MCF 10A (cell line): ENCODE measurements at regions of chr5 and their contacts with region 1.

Region 1: DNA sequence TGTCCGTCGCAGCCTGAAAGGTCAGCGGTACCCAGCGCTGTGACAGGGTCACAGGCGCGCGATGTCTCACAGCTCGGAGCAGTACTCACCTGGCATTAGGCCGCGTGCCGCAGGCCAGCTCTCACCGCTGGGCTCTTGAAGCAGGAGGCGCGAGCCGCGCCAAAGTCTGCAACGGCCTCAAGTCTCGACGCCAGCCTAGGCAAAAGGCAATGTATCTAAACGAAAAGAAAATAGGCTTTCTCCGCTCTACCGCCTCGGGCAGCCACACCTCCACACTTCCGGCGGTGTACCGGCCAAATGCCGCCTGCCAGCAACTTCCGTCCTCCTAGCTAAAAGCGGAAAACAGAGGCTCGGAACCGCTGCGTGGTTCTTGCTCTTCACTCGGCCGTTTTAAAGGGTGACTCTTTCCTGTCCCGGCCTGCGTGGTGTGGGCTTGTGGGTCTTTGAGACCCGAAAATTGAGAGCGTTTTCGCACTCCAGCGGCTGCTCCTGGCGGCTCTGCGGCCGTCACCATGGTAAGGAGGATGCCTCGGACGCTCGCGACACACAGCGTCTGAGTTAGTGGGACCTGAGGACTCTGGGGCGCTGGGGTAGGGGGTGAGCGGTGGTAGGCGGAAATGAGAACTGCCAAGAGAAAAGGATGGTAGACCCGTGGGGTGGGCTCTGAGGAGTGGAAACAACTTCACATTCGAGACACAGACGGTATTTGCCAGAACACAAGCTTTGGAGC is at the starts of genes GFM2 and NSA2:
- DNase-seq: peak; percentile 94
- H3K4me3 Mint-ChIP-seq: peak within 1 kb of the TSS; percentile 98
- H3K27ac Mint-ChIP-seq: peak within 1 kb of the TSS; percentile 92
- H3K4me1 Mint-ChIP-seq: peaks cover 20% of the 10 kb centered on the region
- H3K27me3 Mint-ChIP-seq: no peaks in the 10 kb centered on the region
- CTCF ChIP-seq: no peak
- total RNA-seq, gene GFM2: 26.4 and 31.9 TPM in 2 replicates
- total RNA-seq, gene NSA2: 84.9 and 106 TPM in 2 replicates

Region 2: GRCh38 chr5:74778609-74779008 is 11.6 kb after region 1 on chr5:
- CTCF ChIA-PET with region 1: interaction called, 3 read pairs
- POLR2A ChIA-PET with region 1: interaction called, 14 read pairs
- intact Hi-C with region 1: no loop called
- DNase-seq: no peak
- H3K4me3 Mint-ChIP-seq: no peak overlapping the region
- H3K27ac Mint-ChIP-seq: no peak overlapping the region
- H3K4me1 Mint-ChIP-seq: no peaks in the 10 kb centered on the region
- H3K27me3 Mint-ChIP-seq: no peaks in the 10 kb centered on the region
- CTCF ChIP-seq: no peak

Region 3: DNA sequence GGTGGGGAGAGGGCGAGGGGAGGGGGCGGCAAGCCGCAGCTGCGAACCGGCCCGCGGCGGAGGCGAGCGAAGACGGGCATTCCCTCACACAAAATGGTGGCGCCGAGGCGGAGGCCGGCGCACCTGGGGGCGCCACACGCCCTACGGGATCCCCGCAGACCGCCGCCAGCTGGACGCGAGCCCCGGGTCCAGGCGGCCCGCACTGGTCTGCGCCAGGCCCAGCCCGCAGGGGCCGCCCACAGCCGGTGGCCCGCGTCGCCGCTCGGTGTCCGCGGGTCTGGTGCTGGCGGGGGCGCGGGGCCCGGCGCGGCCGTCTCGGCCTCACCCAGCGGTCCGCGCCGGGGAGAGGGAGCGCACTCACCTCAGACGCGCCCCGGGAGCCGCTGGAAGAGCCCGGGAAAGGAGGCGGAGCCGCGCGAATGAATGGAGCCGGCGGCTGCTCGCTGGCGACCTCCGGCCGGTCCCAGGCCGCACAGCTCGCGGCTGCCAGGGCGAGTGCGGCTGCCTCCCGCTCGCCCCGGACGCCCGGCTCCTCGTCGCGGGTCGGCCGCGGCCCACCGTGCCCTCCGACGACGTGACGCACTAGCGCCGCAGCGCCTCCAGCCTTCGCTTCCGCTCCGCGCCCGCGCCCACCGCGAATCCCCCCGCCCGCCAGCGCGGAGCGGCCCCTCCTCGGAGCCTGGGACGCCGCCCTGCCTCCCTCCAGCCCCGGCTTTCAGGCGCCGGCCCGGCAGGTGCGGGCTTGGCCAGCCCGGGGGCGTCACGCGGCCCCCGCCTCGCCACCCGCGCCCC is 99.0 kb after region 1 on chr5 and contains the start of gene FAM169A:
- CTCF ChIA-PET with region 1: interaction called, 3 read pairs
- POLR2A ChIA-PET with region 1: interaction called, 12 read pairs
- intact Hi-C with region 1: no loop called
- DNase-seq: peak; percentile 63
- H3K4me3 Mint-ChIP-seq: peak within 1 kb of the TSS; percentile 84
- H3K27ac Mint-ChIP-seq: peak within 1 kb of the TSS; percentile 91
- H3K4me1 Mint-ChIP-seq: peaks cover 23% of the 10 kb centered on the region
- H3K27me3 Mint-ChIP-seq: no peaks in the 10 kb centered on the region
- CTCF ChIP-seq: no peak
- total RNA-seq, gene FAM169A: 13.5 and 14.3 TPM in 2 replicates

Region 4: DNA sequence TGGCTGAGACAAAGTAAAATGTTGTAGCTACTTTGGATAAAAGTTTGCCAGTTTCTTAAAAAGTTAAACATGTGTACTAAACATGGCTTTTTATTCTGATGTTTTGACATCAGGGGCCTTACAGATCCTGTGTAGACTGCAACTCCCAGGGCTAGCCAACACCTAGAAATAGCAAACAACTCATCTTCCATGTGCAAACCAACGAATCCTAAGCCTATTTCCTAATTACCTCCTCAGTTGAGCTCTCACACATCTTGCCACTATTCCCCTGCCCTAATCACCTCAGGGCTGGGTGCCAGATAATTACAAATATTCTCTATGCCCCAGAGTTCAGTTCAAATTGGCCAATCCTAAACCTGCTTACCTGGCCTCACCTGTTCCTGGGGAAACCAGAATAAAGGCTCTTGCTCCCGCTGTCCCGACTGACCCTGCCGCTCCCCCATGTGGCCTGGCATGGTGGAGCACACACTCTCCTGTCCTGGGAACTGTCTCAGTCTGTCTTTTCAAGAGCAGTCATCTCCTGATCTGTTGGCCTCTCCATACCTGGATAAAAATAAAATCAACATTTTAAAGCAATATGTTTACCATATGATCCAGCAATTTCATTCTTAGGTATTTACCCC is 136.3 kb after region 1 on chr5:
- CTCF ChIA-PET with region 1: interaction called, 14 read pairs
- POLR2A ChIA-PET with region 1: interaction called, 18 read pairs
- intact Hi-C with region 1: loop called (anchors 1 kb)
- DNase-seq: peak; percentile 83
- H3K4me3 Mint-ChIP-seq: no peak overlapping the region
- H3K27ac Mint-ChIP-seq: no peak overlapping the region
- H3K4me1 Mint-ChIP-seq: no peaks in the 10 kb centered on the region
- H3K27me3 Mint-ChIP-seq: no peaks in the 10 kb centered on the region
- CTCF ChIP-seq: peak; percentile 64

Region 5: DNA sequence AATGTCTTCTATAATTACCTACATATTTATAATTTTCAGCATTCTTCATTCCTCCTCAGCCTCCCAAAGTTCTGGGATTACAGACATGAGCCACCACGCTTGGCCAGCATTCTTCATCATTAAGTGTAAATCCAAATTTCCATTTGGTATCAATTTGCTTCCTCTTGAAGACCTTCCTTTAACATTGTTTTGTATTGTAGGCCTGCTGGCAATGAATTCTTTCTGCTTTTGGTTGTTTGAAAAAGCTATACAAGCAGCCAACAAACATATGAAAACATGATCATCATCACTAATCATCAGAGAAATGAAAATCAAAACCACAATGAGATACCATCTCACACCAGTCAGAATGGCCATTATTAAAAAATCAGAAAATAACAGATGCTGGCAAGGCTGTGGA is 228.9 kb after region 1 on chr5:
- CTCF ChIA-PET with region 1: no interaction called
- POLR2A ChIA-PET with region 1: no interaction called
- intact Hi-C with region 1: no loop called
- DNase-seq: no peak
- H3K4me3 Mint-ChIP-seq: no peak overlapping the region
- H3K27ac Mint-ChIP-seq: no peak overlapping the region
- H3K4me1 Mint-ChIP-seq: no peaks in the 10 kb centered on the region
- H3K27me3 Mint-ChIP-seq: no peaks in the 10 kb centered on the region
- CTCF ChIP-seq: no peak

Region 6: GRCh38 chr5:75265731-75266130 is 498.7 kb after region 1 on chr5:
- CTCF ChIA-PET with region 1: interaction called, 3 read pairs
- POLR2A ChIA-PET with region 1: interaction called, 4 read pairs
- intact Hi-C with region 1: loop called (anchors 1 kb)
- DNase-seq: peak; percentile 47
- H3K4me3 Mint-ChIP-seq: no peak overlapping the region
- H3K27ac Mint-ChIP-seq: no peak overlapping the region
- H3K4me1 Mint-ChIP-seq: no peaks in the 10 kb centered on the region
- H3K27me3 Mint-ChIP-seq: no peaks in the 10 kb centered on the region
- CTCF ChIP-seq: peak; percentile 63